ENCODE measurements at regions of chr9 and their contacts with region 1.

Region 1: DNA sequence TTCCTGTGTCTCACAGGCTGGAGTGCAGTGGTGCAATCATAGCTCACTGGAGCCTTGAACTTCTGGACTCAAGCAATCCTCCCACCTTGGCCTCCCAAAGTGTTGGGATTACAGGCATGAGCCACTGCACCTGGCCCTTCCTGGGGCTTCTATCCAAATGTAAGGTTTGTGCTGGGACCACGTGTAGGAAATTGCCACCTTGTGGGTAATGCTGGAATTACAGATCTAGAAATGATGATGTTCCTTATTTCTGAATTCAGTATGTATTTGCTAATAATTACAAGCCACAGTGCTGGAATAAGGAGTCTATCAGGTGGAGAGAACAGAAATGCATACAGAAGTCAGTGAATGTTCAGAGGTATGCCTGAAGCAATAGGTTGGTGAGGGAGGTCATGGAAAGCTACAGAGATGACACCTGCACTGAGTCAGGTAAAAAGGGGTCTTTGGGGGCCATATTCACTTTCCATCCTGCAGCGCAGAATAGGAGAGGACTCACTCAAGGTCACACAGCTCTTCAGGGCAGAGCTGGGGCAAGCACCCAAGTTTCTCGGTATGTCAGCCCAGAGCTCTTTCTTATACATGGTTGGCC is 8.8 kb upstream of the IGFBPL1 start:
- DNase-seq: peak in 1 of 2 donors; percentile 23
- H3K4me3 ChIP-seq: no peak overlapping the region
- H3K27ac ChIP-seq: no peak overlapping the region
- H3K4me1 ChIP-seq: peaks cover 12 to 17% of the 10 kb centered on the region in 2 donors
- H3K27me3 ChIP-seq: no peaks in the 10 kb centered on the region
- CTCF ChIP-seq: peak; percentile 39 to 76 (median 62)
- POLR2A ChIP-seq: no peak

Region 2: DNA sequence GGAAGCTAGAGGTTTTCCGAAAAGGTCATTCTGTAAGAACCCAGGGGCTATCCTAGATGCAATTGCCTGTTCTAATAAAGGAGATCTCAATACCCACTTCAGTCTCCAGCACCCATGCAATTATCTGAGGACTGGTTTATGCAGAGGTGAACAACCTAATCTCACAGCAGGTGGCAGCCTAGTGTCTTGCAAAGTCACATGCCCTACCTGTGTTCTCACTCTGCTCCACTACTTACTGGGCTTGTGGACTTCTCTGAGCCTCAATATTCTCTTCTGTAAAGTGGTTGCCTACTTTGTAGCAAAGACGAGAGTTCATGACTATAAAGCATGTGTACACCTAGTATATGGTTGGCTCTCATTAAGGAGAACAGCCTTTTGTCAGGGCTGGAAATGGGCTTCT is 61.5 kb before region 1 on chr9:
- intact Hi-C with region 1: loop called (anchors 5 kb)
- DNase-seq: peak; percentile 76 to 79
- H3K4me3 ChIP-seq: no peak overlapping the region
- H3K27ac ChIP-seq: no peak overlapping the region
- H3K4me1 ChIP-seq: no peaks in the 10 kb centered on the region
- H3K27me3 ChIP-seq: no peaks in the 10 kb centered on the region
- CTCF ChIP-seq: peak in 5 of 6 experiments; percentile 14 to 86 (median 81)
- POLR2A ChIP-seq: no peak